Naive thymus-derived CD4-positive, alpha-beta T cell (primary cell): ENCODE measurements at regions of chr17 and their contacts with region 1.

Region 1: DNA sequence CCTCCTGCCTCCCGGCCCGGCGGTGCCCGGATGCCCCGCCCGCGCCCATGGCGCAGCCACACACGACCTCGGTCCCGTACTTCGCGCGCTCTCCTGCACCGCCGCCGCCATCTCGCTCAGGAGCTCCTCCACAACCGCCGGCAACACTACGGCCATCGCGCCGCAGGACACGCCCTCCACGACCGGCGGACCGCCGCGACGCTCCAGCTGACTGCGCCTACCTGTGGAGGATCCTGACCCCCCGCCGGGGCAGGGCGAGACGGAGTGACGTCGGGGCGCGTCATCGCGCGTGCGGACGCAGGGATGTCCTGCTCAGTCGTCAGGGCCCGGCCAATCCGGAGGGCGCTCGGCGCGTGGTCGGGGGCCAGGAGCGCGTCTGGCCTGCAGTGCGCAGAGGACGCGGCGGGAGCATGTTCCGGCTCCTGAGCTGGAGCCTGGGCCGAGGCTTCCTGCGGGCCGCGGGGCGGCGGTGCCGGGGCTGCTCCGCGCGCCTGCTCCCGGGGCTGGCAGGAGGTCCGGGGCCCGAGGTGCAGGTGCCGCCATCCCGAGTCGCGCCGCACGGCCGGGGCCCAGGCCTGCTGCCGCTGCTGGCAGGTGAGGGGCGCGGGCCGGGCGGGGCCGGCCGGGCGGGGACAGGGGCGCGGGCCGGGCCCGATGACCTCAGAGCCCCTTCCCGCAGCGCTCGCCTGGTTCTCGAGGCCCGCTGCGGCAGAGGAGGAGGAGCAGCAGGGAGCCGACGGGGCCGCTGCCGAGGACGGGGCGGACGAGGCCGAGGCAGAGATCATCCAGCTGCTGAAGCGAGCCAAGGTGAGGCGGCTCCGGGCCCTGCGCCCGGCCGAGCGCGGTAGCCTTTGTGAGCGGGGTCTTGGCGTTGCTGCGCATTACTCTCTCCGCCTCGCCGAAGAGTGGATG is at the starts of genes TTC19 and ZSWIM7:
- DNase-seq: peak; percentile 84 to 95 (median 87)
- ATAC-seq: peak; percentile 93
- H3K4me3 ChIP-seq: peak within 1 kb of the TSS; percentile 88
- H3K4me3 Mint-ChIP-seq: peak within 1 kb of the TSS; percentile 87 to 97 (median 94)
- H3K27ac ChIP-seq: peak within 1 kb of the TSS; percentile 86
- H3K27ac Mint-ChIP-seq: peak within 1 kb of the TSS; percentile 91 to 99 (median 96)
- H3K4me1 ChIP-seq: peaks cover 11 to 16% of the 10 kb centered on the region in 2 donors
- H3K4me1 Mint-ChIP-seq: peaks cover 22 to 45% (median 41%) of the 10 kb centered on the region in 7 donors
- H3K27me3 ChIP-seq: no peaks in the 10 kb centered on the region
- H3K27me3 Mint-ChIP-seq: no peaks in the 10 kb centered on the region
- total RNA-seq, gene TTC19: 32.8 to 61.6 (median 37.4) TPM
- total RNA-seq, gene ZSWIM7: 10.0 to 39.6 (median 25.4) TPM

Region 2: DNA sequence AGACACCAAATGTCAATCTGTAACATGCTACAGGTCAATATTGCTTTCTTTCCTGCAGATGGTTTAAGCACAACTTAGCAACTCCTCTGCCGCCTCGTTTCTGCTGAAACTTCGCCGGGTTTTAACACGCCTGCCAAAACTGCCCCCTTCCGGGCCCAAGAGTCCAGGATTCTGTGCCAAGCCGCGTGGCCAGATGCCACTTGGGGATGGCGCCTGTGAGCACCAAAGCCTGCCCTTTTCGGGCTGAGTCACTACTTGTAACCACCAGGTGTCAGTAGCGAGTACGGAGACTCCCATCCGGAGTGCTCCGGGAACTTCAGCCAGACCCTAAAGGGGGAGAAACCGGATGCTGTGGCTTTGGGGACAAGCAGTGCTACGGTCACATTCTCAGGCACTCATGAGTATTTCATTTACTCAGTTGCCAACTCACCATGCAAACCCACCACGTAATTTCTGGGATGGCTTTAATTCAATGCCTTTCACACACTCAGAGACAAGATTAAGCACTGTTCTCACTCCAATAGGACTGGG is 742.4 kb before region 1 on chr17:
- CTCF ChIA-PET with region 1: no interaction called
- POLR2A ChIA-PET with region 1: no interaction called
- intact Hi-C with region 1: loop called in 1 of 2 experiments (anchors 5 kb)
- DNase-seq: peak; percentile 11 to 56 (median 36)
- ATAC-seq: peak; percentile 70
- H3K4me3 ChIP-seq: no peak overlapping the region
- H3K4me3 Mint-ChIP-seq: peak overlapping the region in 5 of 10 donors; percentile 8 to 56 (median 8)
- H3K27ac ChIP-seq: no peak overlapping the region
- H3K27ac Mint-ChIP-seq: no peak overlapping the region
- H3K4me1 ChIP-seq: peaks cover 0 to 12% of the 10 kb centered on the region in 2 donors
- H3K4me1 Mint-ChIP-seq: peaks cover 0 to 26% (median 11%) of the 10 kb centered on the region in 7 donors
- H3K27me3 ChIP-seq: peaks cover 3 to 13% of the 10 kb centered on the region in 2 donors
- H3K27me3 Mint-ChIP-seq: peaks cover 56 to 68% (median 61%) of the 10 kb centered on the region in 5 donors

Region 3: DNA sequence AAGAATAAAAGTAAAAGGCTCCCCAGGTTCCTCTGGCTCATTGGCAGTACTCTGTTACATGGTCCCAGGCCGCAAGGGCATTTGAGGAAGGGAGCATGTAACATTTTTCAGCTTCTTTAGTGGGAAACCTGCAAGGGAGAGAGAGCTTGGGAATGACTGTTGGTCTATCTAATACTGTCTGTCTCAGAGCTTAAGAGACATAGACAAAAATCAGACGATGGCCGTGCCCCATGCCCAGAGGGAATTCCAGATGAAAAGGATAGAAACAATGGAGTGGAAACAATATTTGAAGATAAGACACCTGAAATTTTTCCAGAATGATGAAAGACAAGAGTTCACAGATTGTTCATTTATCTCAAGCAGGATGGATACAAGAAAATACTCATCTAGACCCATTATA is 102.9 kb before region 1 on chr17:
- CTCF ChIA-PET with region 1: interaction called, 3 read pairs
- POLR2A ChIA-PET with region 1: interaction called, 5 read pairs
- intact Hi-C with region 1: loop called in 1 of 2 experiments (anchors 2 kb)
- DNase-seq: no peak
- ATAC-seq: no peak
- H3K4me3 ChIP-seq: no peak overlapping the region
- H3K4me3 Mint-ChIP-seq: peak overlapping the region; percentile 39 to 89 (median 79)
- H3K27ac ChIP-seq: no peak overlapping the region
- H3K27ac Mint-ChIP-seq: peak overlapping the region; percentile 66 to 95 (median 83)
- H3K4me1 ChIP-seq: peaks cover 0 to 8% of the 10 kb centered on the region in 2 donors
- H3K4me1 Mint-ChIP-seq: peaks cover 11 to 28% (median 24%) of the 10 kb centered on the region in 7 donors
- H3K27me3 ChIP-seq: no peaks in the 10 kb centered on the region
- H3K27me3 Mint-ChIP-seq: peaks cover 0 to 10% (median 0%) of the 10 kb centered on the region in 5 donors

Region 4: GRCh38 chr17:15944759-15945529 is 54.8 kb before region 1 on chr17 and contains the start of gene ADORA2B:
- CTCF ChIA-PET with region 1: interaction called, 4 read pairs
- POLR2A ChIA-PET with region 1: no interaction called
- intact Hi-C with region 1: loop called (anchors 1 kb)
- DNase-seq: peak in 8 of 9 donors; percentile 5 to 77 (median 24)
- ATAC-seq: peak; percentile 75
- H3K4me3 ChIP-seq: peak within 1 kb of the TSS; percentile 60
- H3K4me3 Mint-ChIP-seq: peak within 1 kb of the TSS; percentile 78 to 97 (median 83)
- H3K27ac ChIP-seq: no peak within 1 kb of the TSS
- H3K27ac Mint-ChIP-seq: peak within 1 kb of the TSS in 1 of 9 donors; percentile 33
- H3K4me1 ChIP-seq: no peaks in the 10 kb centered on the region
- H3K4me1 Mint-ChIP-seq: peaks cover 8 to 15% (median 9%) of the 10 kb centered on the region in 7 donors
- H3K27me3 ChIP-seq: peaks cover 0 to 7% of the 10 kb centered on the region in 2 donors
- H3K27me3 Mint-ChIP-seq: peaks cover 25 to 53% (median 27%) of the 10 kb centered on the region in 5 donors
- total RNA-seq, gene ADORA2B: 0.50 to 2.2 (median 1.6) TPM in 3 of 5 experiments, not detected in the others

Region 5: GRCh38 chr17:15954222-15954621 is 45.5 kb before region 1 on chr17:
- CTCF ChIA-PET with region 1: no interaction called
- POLR2A ChIA-PET with region 1: no interaction called
- intact Hi-C with region 1: loop called (anchors 1 to 2 kb)
- DNase-seq: no peak
- ATAC-seq: peak; percentile 19
- H3K4me3 ChIP-seq: no peak overlapping the region
- H3K4me3 Mint-ChIP-seq: no peak overlapping the region
- H3K27ac ChIP-seq: no peak overlapping the region
- H3K27ac Mint-ChIP-seq: peak overlapping the region in 1 of 9 donors; percentile 46
- H3K4me1 ChIP-seq: peaks cover 4 to 7% of the 10 kb centered on the region in 2 donors
- H3K4me1 Mint-ChIP-seq: peaks cover 0 to 30% (median 7%) of the 10 kb centered on the region in 7 donors
- H3K27me3 ChIP-seq: no peaks in the 10 kb centered on the region
- H3K27me3 Mint-ChIP-seq: peaks cover 0 to 50% (median 0%) of the 10 kb centered on the region in 5 donors